Ascending aorta (tissue), 2 donors: ENCODE measurements at regions of chr2 and their contacts with region 1.

Region 1: GRCh38 chr2:109128048-109128465 is 948 bp upstream of the SH3RF3 start:
- DNase-seq: peak in 1 of 2 donors; percentile 91
- H3K4me3 ChIP-seq: peak overlapping the region; percentile 67 to 72
- H3K27ac ChIP-seq: peak overlapping the region; percentile 76 to 85
- H3K4me1 ChIP-seq: peaks cover 4 to 21% of the 10 kb centered on the region in 2 donors
- H3K27me3 ChIP-seq: no peaks in the 10 kb centered on the region
- CTCF ChIP-seq: peak; percentile 90 to 93 (median 92)

Region 2: DNA sequence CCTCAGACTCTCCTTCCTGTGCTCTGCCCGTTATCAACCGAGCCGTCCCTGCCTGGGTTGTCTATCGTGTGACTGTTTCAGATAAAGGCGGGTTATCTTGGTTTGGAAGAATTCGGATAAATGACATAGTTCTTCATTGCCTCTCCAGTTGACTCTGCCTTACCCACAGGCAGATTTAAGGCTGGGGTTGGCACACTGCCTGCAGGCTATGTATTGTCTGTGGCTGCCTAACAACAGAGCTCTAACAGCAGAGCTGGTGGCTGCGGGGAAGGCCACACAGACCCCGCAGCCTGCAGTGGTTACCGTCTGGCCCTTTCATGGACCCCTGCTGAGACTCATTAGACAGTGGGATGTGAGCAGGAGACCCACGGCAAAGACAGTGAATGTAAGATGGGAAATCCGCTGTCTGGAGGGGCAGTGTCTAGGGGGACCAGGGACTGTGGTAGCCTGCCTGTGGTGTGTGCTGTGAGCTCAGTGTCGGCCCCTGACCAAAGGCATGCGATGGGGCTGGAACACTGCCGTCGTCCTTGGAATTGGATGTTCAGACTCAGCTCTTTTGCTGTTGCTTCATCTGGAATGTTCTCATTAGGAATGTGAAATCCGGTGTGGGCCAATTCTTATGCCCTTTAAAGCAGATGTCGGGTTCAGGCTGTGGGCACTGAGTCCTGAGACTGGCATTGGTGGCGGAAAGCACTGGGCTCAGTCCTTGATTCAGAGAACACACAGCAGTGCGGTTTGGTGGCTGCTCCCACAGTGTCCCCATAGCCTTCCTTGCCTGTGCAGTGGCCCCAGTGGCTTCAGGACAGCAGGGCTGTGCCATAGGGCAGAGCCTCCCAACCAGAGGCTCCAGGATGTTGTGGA is 45.5 kb after region 1 on chr2:
- intact Hi-C with region 1: loop called (anchors 2 kb)
- DNase-seq: peak; percentile 75 to 97
- H3K4me3 ChIP-seq: peak overlapping the region; percentile 6 to 31
- H3K27ac ChIP-seq: peak overlapping the region; percentile 95 to 98
- H3K4me1 ChIP-seq: peaks cover 27 to 70% of the 10 kb centered on the region in 2 donors
- H3K27me3 ChIP-seq: no peaks in the 10 kb centered on the region
- CTCF ChIP-seq: no peak

Region 3: DNA sequence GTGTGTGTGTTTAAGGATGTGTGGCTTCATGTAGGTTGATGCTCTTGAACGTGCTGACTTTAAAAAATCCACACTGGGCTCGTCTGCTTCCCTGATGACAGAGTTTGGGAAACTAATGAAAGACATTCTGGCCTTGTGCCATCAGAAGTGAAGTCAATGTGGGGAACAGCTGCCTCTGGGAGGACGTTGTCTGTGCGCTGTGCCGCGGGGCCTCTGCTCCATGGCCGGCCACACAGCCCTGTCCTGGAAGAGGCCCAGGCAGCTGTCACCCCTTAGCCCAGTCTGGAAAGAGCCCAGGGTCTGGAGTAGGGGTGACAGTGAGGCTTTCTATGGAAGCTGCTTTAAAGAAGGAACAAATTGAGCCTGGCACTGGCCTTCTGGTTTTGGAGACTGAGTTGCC is 156.8 kb after region 1 on chr2:
- intact Hi-C with region 1: loop called (anchors 5 kb)
- DNase-seq: no peak
- H3K4me3 ChIP-seq: peak overlapping the region in 1 of 2 donors; percentile 4
- H3K27ac ChIP-seq: peak overlapping the region; percentile 31 to 37
- H3K4me1 ChIP-seq: peaks cover 14 to 30% of the 10 kb centered on the region in 2 donors
- H3K27me3 ChIP-seq: no peaks in the 10 kb centered on the region
- CTCF ChIP-seq: no peak

Region 4: GRCh38 chr2:109438773-109439389 is 310.8 kb after region 1 on chr2:
- intact Hi-C with region 1: loop called (anchors 5 kb)
- DNase-seq: peak; percentile 75 to 93
- H3K4me3 ChIP-seq: no peak overlapping the region
- H3K27ac ChIP-seq: peak overlapping the region; percentile 89 to 96
- H3K4me1 ChIP-seq: peaks cover 36 to 49% of the 10 kb centered on the region in 2 donors
- H3K27me3 ChIP-seq: no peaks in the 10 kb centered on the region
- CTCF ChIP-seq: peak in 1 of 3 experiments; percentile 25

Region 5: DNA sequence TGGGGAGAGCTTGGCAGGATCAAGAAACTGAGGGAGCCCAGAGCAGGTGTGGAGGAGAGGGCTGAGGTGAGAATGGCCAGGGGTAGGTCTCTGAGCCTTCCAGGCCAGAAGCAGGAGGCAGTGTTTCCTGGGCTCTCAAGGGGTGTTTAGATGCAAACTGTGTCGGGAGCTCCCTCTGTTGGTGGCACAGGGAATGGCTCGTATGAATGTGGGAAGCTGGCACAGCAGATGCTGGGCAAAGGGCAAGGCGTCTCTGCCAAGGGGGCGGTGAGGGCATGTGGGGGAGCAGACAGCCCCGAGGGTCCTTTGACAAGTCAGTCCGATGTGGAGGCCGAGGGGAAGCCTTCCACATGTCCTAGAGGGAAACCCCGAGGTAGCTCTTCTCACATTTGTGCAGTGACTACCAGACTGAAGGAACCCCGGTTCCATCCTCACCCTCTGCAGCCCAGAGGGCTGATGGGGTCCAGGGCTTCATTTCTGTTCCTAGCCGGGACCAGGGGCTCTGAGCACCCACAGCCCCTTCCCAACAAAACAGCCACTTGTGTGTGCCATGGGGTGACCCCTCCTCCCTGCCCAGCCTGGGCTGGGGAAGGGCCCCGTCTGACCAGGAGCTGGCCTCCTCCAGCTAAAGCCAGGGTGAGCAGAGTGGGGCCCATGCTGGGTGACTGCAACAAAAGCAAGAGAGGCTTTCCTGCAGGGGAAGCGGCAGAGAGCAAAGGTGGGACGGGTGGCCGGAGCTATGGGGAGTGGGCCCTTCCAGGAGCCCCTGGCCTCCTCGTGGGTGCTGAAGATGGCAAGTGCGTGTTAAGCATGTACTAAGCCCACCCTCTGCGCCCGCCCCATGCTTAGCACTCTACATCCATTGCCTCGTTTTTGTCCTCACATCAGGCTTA is 382.3 kb after region 1 on chr2:
- intact Hi-C with region 1: loop called (anchors 1 kb)
- DNase-seq: peak; percentile 37 to 92
- H3K4me3 ChIP-seq: no peak overlapping the region
- H3K27ac ChIP-seq: no peak overlapping the region
- H3K4me1 ChIP-seq: peaks cover 7 to 15% of the 10 kb centered on the region in 2 donors
- H3K27me3 ChIP-seq: no peaks in the 10 kb centered on the region
- CTCF ChIP-seq: peak; percentile 89 to 94 (median 93)